ENCODE measurements at regions of chr2 and their contacts with region 1.

Region 1: GRCh38 chr2:219057709-219058540 is 2.8 kb downstream of the IHH start:
- DNase-seq: peak; percentile 90
- ATAC-seq: peak; percentile 97
- H3K4me3 Mint-ChIP-seq: no peak overlapping the region
- H3K27ac Mint-ChIP-seq: no peak overlapping the region
- H3K4me1 Mint-ChIP-seq: peaks cover 19% of the 10 kb centered on the region
- H3K27me3 Mint-ChIP-seq: peaks cover 56% of the 10 kb centered on the region

Region 2: DNA sequence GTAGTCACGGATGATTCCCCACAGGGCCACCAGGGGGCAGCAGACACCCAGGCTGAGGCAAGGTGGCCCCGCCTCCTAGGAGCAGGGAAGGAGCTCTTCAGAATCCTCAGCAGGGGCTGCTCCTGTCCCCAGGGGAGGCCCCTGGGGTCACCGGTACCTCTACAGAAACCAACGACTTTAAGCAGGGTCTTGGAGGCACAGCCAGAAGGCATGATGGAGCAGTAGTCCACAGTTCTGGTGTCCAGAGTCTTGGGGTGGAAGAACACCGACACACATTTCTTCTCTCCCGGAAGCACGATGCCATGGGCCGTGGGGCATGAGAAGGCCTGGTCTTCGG is 28.1 kb before region 1 on chr2:
- CTCF ChIA-PET with region 1: interaction called, 12 read pairs
- POLR2A ChIA-PET with region 1: no interaction called
- intact Hi-C with region 1: loop called in 1 of 2 experiments (anchors 1 kb)
- DNase-seq: peak; percentile 88
- ATAC-seq: peak; percentile 98
- H3K4me3 Mint-ChIP-seq: no peak overlapping the region
- H3K27ac Mint-ChIP-seq: no peak overlapping the region
- H3K4me1 Mint-ChIP-seq: no peaks in the 10 kb centered on the region
- H3K27me3 Mint-ChIP-seq: peaks cover 11% of the 10 kb centered on the region

Region 3: GRCh38 chr2:219041252-219041651 is 16.7 kb before region 1 on chr2 and contains the start of gene CFAP65:
- CTCF ChIA-PET with region 1: interaction called, 23 read pairs
- POLR2A ChIA-PET with region 1: interaction called, 3 read pairs
- intact Hi-C with region 1: no loop called
- DNase-seq: peak; percentile 70
- ATAC-seq: peak; percentile 60
- H3K4me3 Mint-ChIP-seq: peak within 1 kb of the TSS; percentile 51
- H3K27ac Mint-ChIP-seq: no peak within 1 kb of the TSS
- H3K4me1 Mint-ChIP-seq: peaks cover 9% of the 10 kb centered on the region
- H3K27me3 Mint-ChIP-seq: peaks cover 43% of the 10 kb centered on the region
- total RNA-seq, gene CFAP65: not detected

Region 4: DNA sequence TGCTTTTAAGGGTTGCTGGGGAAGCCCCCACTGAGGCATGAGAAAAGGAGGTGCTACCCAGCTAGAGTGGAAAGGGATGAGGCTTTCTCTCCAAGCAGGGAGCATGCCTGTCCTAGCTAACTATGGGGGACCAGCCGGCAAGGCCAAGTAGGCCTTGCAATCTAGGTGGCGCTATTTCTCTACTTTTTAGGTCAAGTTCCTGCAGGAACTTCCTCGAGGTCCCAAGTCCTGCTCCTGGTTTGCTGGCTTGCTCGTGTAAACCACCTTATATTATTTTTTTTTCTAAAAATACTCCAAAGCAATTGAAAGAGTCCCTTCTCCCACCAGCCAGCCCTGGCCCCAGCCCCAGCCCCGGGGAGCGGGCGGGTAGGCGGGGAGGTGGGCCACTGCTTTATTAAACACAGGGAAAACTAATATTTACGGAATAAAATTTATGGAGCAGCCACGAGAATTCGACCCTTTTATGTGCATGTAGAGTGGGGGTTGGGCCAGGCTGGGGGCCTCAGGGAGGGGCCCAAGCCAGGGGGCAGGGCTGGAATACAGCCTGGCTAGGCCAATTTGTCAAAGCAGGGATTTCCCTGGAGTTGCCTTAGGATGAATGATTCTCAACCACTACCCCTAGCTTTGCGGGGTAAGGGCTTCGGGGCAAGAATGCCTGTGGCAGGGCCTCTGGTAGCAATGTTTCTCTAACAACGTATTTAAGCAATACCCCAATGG is 15.6 kb after region 1 on chr2:
- CTCF ChIA-PET with region 1: interaction called, 74 read pairs
- POLR2A ChIA-PET with region 1: no interaction called
- intact Hi-C with region 1: no loop called
- DNase-seq: peak; percentile 41
- ATAC-seq: no peak
- H3K4me3 Mint-ChIP-seq: no peak overlapping the region
- H3K27ac Mint-ChIP-seq: no peak overlapping the region
- H3K4me1 Mint-ChIP-seq: no peaks in the 10 kb centered on the region
- H3K27me3 Mint-ChIP-seq: no peaks in the 10 kb centered on the region

Region 5: DNA sequence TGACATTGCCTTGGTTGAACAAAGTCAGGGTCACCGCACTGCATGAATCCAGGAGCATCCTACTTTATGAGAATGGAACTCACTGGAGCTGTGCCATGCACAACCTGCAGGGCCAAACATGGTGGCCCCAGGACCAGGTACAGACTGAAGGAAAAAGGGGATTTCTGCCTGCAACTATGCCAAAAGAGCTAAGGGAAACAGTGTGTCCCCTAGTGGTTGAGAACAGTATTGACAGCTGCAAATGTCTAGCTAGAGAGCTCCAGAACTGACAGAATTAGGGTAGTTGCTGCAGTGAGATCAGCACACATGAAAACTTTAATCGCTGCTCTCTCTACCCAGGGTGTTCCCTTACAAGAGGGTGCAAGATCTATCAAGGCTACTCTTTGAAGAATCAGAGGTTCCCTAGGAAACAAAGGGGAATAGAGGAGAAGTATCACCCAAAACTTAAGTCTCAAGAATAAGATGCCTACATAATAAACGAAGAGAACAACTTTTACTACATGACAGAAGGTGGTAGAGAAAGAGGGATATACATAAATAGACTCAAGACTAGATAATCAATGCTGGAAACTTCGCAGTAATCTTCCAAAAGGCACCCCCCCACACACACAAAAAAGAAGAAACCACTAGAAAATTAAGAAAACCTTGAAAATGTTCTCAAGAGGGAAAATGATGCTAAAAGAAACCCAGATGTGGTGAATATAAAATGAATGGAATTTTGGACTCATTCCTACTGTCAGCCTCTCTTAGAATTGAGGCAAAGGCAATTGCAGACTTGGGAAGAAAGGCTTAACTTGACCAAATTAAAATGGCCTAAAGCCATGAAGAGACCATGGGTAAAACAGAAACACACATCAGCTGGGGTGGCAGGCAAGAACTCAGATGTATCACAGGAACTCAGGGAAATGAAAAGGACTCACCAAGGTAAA is 46.4 kb after region 1 on chr2:
- CTCF ChIA-PET with region 1: interaction called, 21 read pairs
- POLR2A ChIA-PET with region 1: no interaction called
- intact Hi-C with region 1: no loop called
- DNase-seq: peak; percentile 36
- ATAC-seq: peak; percentile 80
- H3K4me3 Mint-ChIP-seq: no peak overlapping the region
- H3K27ac Mint-ChIP-seq: peak overlapping the region; percentile 44
- H3K4me1 Mint-ChIP-seq: peaks cover 33% of the 10 kb centered on the region
- H3K27me3 Mint-ChIP-seq: no peaks in the 10 kb centered on the region

Region 6: DNA sequence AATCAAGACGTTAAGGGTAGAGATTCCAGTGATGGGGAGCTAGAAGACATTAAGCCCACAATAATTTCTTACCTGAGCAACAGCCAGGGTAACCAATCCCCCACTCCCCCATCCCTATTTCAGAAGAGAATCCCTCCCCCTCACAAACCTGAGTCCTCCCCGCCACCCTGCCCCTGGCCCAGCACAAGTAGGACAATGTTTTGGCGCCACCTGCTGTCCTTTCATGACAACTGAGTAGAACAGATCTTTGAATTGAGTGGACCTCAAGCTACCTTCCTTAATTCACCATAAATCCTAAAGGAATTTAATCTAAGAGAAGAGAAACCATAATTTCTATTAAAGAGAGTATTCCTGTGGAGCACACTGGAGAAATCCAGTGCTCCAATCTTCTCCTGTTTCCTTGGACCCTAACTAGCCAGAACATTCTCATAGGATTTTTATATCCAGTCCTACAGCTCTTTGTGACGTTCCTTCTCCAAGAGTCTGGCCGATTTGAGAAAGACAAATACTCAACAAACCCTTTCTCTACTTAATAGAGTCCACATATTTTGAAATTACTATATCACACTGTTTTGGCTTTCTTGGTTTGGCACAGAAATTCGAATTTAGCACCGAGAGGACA is 61.6 kb after region 1 on chr2:
- CTCF ChIA-PET with region 1: interaction called, 70 read pairs
- POLR2A ChIA-PET with region 1: no interaction called
- intact Hi-C with region 1: loop called (anchors 1 kb)
- DNase-seq: peak; percentile 82
- ATAC-seq: peak; percentile 72
- H3K4me3 Mint-ChIP-seq: no peak overlapping the region
- H3K27ac Mint-ChIP-seq: no peak overlapping the region
- H3K4me1 Mint-ChIP-seq: peaks cover 6% of the 10 kb centered on the region
- H3K27me3 Mint-ChIP-seq: no peaks in the 10 kb centered on the region

Region 7: GRCh38 chr2:219352448-219353023 is 294.6 kb after region 1 on chr2:
- CTCF ChIA-PET with region 1: no interaction called
- POLR2A ChIA-PET with region 1: no interaction called
- intact Hi-C with region 1: loop called in 1 of 2 experiments (anchors 2 kb)
- DNase-seq: peak; percentile 86
- ATAC-seq: peak; percentile 96
- H3K4me3 Mint-ChIP-seq: no peak overlapping the region
- H3K27ac Mint-ChIP-seq: no peak overlapping the region
- H3K4me1 Mint-ChIP-seq: no peaks in the 10 kb centered on the region
- H3K27me3 Mint-ChIP-seq: peaks cover 30% of the 10 kb centered on the region

Region 8: DNA sequence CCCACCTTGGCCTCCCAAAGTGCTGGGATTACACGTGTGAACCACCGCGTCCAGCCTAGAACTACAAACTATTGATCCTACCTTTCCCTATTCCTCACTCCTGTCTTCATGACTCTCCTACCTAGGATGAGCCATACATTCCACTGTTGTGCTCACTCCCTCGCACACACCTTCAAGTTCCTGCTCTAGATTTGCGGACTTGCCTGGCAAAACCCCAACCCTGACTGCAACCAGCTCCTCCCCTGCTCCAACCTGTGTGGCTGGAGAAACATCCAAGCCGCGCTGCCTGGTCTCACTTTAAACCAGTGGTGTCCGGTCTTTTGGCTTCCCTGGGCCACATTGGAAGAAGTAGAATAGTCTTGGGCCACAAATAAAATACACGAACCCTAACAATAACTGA is 334.8 kb after region 1 on chr2:
- CTCF ChIA-PET with region 1: no interaction called
- POLR2A ChIA-PET with region 1: no interaction called
- intact Hi-C with region 1: no loop called
- DNase-seq: no peak
- ATAC-seq: no peak
- H3K4me3 Mint-ChIP-seq: no peak overlapping the region
- H3K27ac Mint-ChIP-seq: no peak overlapping the region
- H3K4me1 Mint-ChIP-seq: peaks cover 17% of the 10 kb centered on the region
- H3K27me3 Mint-ChIP-seq: no peaks in the 10 kb centered on the region